ENCODE measurements at regions of chr4 and their contacts with region 1.

Region 1: GRCh38 chr4:99117876-99118693 is 26.0 kb downstream of the ADH4 start:
- DNase-seq: no peak
- ATAC-seq: no peak

Region 2: GRCh38 chr4:99144070-99144469 is 26.0 kb after region 1 on chr4 and contains the start of gene ADH4:
- intact Hi-C with region 1: loop called (anchors 2 kb)
- DNase-seq: no peak
- ATAC-seq: no peak
- total RNA-seq, gene ADH4: not detected

Region 3: GRCh38 chr4:99405433-99406115 is 287.5 kb after region 1 on chr4:
- intact Hi-C with region 1: loop called (anchors 5 kb)
- DNase-seq: peak; percentile 26
- ATAC-seq: peak; percentile 83

Region 4: GRCh38 chr4:99473131-99473530 is 355.0 kb after region 1 on chr4:
- intact Hi-C with region 1: no loop called
- DNase-seq: no peak
- ATAC-seq: no peak